GM13976 (cell line): ENCODE measurements at regions of chr5 and their contacts with region 1.

Region 1: DNA sequence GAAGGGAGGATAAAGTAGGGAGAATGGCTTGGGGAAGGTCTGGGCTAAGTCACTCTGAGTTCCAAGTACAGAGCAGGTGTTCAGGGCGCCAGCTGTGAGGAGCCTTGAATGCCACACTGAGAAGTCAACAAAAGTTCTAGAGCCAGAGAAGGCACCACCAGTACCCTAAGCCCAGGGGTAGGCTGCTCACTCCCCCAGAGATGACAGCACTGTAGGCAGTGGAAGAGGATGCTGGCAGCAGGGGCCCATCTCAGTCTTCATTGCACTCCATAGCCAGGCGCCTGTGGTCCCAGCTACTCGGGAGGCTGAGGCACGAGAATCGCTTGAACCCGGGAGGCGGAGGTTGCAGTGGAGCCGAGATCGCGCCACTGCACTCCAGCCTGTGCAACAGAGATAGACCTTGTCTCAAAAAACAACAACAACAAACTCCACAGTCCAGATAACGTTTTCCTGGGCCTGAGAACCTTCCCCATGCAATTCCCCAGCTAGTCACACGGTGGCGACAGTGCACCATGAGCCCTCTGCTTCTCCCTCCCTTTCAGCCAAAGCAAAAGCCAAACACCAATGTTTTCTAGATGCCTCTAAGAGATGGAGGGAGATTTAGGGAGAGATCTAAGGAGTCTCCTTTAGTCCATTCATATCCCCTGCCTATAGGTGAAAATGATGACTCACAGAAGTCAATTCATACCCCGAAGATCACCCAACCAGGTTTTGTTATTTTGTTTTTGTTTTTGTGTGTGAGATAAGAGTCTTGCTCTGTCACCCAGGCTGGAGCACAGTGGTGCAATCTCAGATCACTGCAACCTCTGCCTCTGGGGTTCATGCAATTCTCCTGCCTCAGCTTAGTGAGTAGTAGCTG is 19.8 kb upstream of the NSD1 start:
- DNase-seq: peak; percentile 92
- CTCF ChIP-seq: peak; percentile 95

Region 2: GRCh38 chr5:176660860-176661641 is 452.7 kb before region 1 on chr5:
- in situ Hi-C with region 1: loop called (anchors 10 kb)
- DNase-seq: peak; percentile 96
- CTCF ChIP-seq: peak; percentile 96

Region 3: GRCh38 chr5:177049285-177049684 is 64.5 kb before region 1 on chr5:
- in situ Hi-C with region 1: no loop called
- DNase-seq: no peak
- CTCF ChIP-seq: no peak

Region 4: GRCh38 chr5:177296581-177296980 is 182.8 kb after region 1 on chr5:
- in situ Hi-C with region 1: loop called (anchors 10 kb)
- DNase-seq: no peak
- CTCF ChIP-seq: no peak